PC-3 (cell line): ENCODE measurements at regions of chr20 and their contacts with region 1.

Region 1: GRCh38 chr20:38645980-38646858 is 44.6 kb downstream of the ARHGAP40 start:
- DNase-seq: peak; percentile 83
- ATAC-seq: peak; percentile 88
- H3K4me3 ChIP-seq: peak overlapping the region; percentile 63
- H3K27ac ChIP-seq: no peak overlapping the region
- H3K4me1 ChIP-seq: no peaks in the 10 kb centered on the region; the same call in 1 of the 2 replicates
- H3K27me3 ChIP-seq: peaks cover 13% of the 10 kb centered on the region; the same call in 1 of the 2 replicates
- CTCF ChIP-seq: peak; percentile 94

Region 2: DNA sequence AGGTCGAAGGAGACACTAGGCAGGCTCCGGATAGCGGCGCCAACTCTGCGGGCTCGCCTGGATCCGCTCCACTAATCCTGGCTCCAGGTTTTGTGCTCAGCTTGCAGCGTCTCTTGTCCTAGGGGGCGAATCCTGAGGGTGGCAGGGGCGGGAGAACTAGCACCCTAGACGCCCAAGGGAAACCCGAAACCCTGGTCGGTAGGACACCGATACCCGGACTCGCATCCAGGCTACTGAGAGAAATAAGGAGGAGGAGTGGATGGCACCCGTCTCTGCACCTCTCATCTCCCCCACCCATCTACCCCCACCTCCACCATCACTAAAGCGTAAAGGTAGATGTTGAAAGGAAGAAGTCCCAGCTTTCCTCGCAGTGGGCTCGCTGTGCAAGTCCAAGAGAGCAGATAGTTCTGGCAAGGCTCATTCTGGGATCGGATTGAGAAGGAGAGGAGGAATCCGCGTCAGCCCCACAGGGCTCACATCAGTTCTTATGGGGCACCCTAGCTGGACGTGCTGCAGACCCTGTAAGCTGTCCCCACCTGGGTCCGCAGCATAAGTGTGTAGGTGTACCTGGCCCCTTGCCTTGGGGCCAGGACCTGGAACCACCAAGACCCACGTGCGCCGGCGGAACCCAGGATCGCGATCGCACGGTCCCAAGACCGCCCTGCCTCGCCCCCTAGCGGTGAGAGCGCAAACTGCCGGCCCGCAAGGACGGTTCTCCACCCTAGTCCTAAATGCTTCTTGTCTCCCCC is 84.9 kb after region 1 on chr20:
- CTCF ChIA-PET with region 1: no interaction called
- POLR2A ChIA-PET with region 1: no interaction called
- intact Hi-C with region 1: loop called (anchors 5 kb)
- DNase-seq: peak; percentile 66
- ATAC-seq: peak; percentile 91
- H3K4me3 ChIP-seq: peak overlapping the region; percentile 51
- H3K27ac ChIP-seq: no peak overlapping the region
- H3K4me1 ChIP-seq: peaks cover 4% of the 10 kb centered on the region; the same call in 1 of the 2 replicates
- H3K27me3 ChIP-seq: peaks cover 57% of the 10 kb centered on the region
- CTCF ChIP-seq: peak; percentile 98

Region 3: DNA sequence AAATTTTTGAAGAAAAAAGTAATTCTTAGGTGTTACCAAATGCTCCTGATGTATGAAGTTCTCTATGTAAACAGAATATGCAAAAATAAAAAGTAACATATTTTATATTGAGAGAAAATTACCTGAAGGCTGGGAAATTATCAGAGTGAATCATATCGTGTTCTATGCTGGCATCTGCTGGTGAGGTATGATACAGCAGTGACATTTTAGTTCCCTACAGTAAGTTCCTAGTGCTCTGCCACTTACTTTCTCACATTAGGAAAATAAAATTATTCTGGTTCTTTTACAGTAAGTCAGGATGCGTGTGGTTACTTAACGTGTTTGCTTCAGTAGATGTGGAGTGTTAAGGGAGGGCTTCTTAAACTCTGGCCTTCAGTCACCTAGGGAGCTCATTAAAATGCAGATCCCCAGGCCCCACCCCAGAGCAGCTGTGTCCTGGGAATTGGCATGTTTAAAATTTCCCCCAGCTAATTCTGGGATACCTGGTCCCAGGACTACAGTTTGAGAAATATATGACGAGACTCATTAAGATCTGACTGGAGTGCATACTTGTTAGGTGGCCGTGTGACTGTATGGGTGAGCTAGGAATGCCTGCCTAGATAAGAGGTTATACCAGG is 105.2 kb after region 1 on chr20:
- CTCF ChIA-PET with region 1: interaction called, 3 read pairs
- POLR2A ChIA-PET with region 1: interaction called, 3 read pairs
- intact Hi-C with region 1: loop called (anchors 1 kb)
- DNase-seq: peak; percentile 68
- ATAC-seq: no peak
- H3K4me3 ChIP-seq: no peak overlapping the region
- H3K27ac ChIP-seq: no peak overlapping the region
- H3K4me1 ChIP-seq: peaks cover 17% of the 10 kb centered on the region; the same call in 1 of the 2 replicates
- H3K27me3 ChIP-seq: no peaks in the 10 kb centered on the region
- CTCF ChIP-seq: peak; percentile 84

Region 4: DNA sequence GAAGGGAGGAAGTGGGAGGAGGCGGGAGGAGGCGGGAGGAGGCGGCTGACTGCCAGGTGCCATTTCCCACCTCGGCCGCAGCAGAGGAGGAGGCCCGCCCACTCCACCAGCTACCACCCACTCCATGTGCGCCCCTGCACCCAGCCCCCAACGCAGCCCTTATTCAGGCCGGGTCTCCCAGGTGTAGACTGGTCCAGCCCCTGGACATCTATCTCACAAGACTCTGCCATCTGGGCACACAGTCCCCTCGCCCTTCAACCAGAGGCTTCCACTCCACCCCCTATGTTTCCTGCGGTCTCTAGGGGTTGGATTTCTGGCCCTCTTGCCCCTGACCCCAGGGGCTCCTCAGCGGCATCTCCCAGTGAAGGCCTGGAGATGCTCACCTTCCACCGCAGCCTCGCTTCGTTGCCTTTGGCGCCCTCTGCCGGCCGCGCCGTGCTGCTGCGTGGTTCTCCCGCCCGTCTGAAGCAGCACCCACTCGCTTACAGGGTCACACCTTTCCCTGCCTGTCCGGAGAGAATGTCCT is 247.4 kb after region 1 on chr20:
- CTCF ChIA-PET with region 1: no interaction called
- POLR2A ChIA-PET with region 1: no interaction called
- intact Hi-C with region 1: loop called (anchors 5 kb)
- DNase-seq: peak; percentile 75
- ATAC-seq: peak; percentile 95
- H3K4me3 ChIP-seq: peak overlapping the region; percentile 32; the same call in 1 of the 2 replicates
- H3K27ac ChIP-seq: no peak overlapping the region
- H3K4me1 ChIP-seq: peaks cover 4% of the 10 kb centered on the region; the same call in 1 of the 2 replicates
- H3K27me3 ChIP-seq: peaks cover 14% of the 10 kb centered on the region; the same call in 1 of the 2 replicates
- CTCF ChIP-seq: peak; percentile 83

Region 5: DNA sequence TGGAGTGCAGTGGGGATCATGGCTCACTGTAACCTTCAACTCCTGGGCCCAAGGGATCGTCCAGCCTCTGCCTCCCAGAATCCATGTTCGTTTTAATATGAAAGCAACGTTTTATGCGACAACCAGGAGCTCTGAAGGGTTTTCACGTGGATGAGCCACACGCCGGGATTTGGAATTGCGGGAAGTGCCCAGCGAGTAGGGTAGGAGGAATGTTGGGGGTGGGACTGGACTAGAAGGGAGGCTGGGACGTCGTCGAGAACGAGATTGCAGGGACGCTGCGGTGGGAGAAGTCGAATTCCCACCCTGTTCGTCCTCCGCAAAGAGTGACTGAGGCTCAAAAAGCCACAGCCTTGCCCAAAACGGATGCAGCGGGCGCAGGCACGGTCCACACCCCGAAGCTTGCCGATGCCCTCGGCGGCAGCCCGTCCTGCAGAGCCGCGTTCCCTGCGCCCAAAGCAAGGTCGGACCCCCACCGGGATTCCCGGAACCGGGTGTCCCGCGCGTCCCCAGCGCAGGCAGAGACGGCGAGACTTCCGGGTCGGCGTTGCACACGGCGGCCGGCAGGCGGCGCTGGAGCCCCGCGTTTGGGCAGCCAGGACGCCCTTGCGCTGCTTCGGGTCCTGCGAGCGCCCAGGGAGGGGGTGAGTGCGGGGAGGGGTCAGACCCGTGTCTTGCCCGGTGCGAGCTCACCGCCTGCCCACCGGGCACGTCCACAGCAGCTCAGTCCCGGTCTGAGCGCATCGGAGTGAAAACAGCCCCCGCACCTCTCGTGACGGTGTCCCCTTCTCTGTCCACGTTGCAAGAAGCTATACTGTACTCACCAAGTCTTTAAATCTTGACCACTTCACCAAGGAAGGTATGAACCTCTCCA is 403.7 kb after region 1 on chr20:
- CTCF ChIA-PET with region 1: no interaction called
- POLR2A ChIA-PET with region 1: no interaction called
- intact Hi-C with region 1: loop called (anchors 5 kb)
- DNase-seq: peak; percentile 80
- ATAC-seq: peak; percentile 87
- H3K4me3 ChIP-seq: peak overlapping the region; percentile 87
- H3K27ac ChIP-seq: no peak overlapping the region
- H3K4me1 ChIP-seq: 0 out of 2 replicates have a peak, but pooled peaks cover 4% of the 10 kb centered on the region
- H3K27me3 ChIP-seq: no peaks in the 10 kb centered on the region
- CTCF ChIP-seq: peak; percentile 93